CD8-positive, alpha-beta T cell (primary cell): ENCODE measurements at regions of chr7 and their contacts with region 1.

Region 1: GRCh38 chr7:74206589-74207120 is 3.2 kb upstream of the LAT2 start:
- DNase-seq: peak; percentile 57 to 89 (median 79)
- ATAC-seq: peak; percentile 86
- H3K4me3 ChIP-seq: peak overlapping the region; percentile 42 to 54
- H3K4me3 Mint-ChIP-seq: no peak overlapping the region
- H3K27ac ChIP-seq: no peak overlapping the region
- H3K27ac Mint-ChIP-seq: no peak overlapping the region
- H3K4me1 ChIP-seq: peaks cover 20% of the 10 kb centered on the region
- H3K4me1 Mint-ChIP-seq: peaks cover 22% of the 10 kb centered on the region
- H3K27me3 ChIP-seq: no peaks in the 10 kb centered on the region
- H3K27me3 Mint-ChIP-seq: peaks cover 3% of the 10 kb centered on the region
- CTCF ChIP-seq: peak; percentile 99

Region 2: DNA sequence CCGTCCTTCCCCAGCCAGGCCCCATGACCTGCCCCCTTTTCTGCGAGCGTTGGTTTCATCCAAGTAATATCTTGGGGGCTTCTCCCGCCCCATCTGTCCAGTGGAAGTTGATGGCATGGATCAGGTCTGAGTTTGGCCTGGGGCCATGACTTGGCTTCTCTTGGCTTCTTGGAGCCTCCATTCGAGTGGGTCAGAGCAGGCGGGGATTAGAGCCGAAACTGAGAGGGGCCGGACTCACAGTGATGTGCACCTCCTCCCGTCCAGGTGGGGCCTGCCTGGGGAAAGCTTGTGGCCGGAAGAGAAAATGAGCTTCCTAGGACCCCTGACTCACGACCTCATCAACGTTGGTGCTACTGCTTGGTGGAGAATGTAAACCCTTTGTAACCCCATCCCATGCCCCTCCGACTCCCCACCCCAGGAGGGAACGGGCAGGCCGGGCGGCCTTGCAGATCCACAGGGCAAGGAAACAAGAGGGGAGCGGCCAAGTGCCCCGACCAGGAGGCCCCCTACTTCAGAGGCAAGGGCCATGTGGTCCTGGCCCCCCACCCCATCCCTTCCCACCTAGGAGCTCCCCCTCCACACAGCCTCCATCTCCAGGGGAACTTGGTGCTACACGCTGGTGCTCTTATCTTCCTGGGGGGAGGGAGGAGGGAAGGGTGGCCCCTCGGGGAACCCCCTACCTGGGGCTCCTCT is 138.1 kb before region 1 on chr7:
- CTCF ChIA-PET with region 1: interaction called, 10 read pairs
- POLR2A ChIA-PET with region 1: no interaction called
- intact Hi-C with region 1: loop called (anchors 1 to 2 kb)
- DNase-seq: no peak
- ATAC-seq: no peak
- H3K4me3 ChIP-seq: no peak overlapping the region
- H3K4me3 Mint-ChIP-seq: no peak overlapping the region
- H3K27ac ChIP-seq: no peak overlapping the region
- H3K27ac Mint-ChIP-seq: no peak overlapping the region
- H3K4me1 ChIP-seq: no peaks in the 10 kb centered on the region
- H3K4me1 Mint-ChIP-seq: peaks cover 2% of the 10 kb centered on the region
- H3K27me3 ChIP-seq: no peaks in the 10 kb centered on the region
- H3K27me3 Mint-ChIP-seq: no peaks in the 10 kb centered on the region
- CTCF ChIP-seq: no peak

Region 3: DNA sequence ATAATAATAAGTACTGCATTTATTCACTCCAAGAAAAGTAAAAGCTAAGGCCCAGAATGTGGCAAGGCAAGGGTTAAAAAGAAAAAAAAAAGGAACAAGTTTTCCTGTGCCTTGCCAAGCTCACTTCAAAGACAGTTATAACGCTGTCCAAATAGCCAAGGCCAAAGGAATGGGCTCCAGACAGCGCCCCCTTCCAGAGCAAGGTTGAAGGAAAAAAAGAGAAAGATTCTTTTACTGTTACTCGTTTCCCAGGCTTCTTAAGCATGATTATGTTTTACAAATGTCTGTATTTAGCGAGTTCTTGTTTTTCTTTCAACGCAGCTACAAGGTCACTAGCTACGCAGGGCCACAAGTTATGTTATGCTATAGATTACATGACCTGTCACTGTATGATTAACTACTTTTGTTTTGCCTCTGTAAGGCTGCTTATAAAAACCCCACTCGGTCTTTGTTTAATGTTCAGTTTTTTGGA is 41.6 kb before region 1 on chr7:
- CTCF ChIA-PET with region 1: no interaction called
- POLR2A ChIA-PET with region 1: no interaction called
- intact Hi-C with region 1: no loop called
- DNase-seq: no peak
- ATAC-seq: no peak
- H3K4me3 ChIP-seq: no peak overlapping the region
- H3K4me3 Mint-ChIP-seq: no peak overlapping the region
- H3K27ac ChIP-seq: no peak overlapping the region
- H3K27ac Mint-ChIP-seq: no peak overlapping the region
- H3K4me1 ChIP-seq: no peaks in the 10 kb centered on the region
- H3K4me1 Mint-ChIP-seq: no peaks in the 10 kb centered on the region
- H3K27me3 ChIP-seq: no peaks in the 10 kb centered on the region
- H3K27me3 Mint-ChIP-seq: no peaks in the 10 kb centered on the region
- CTCF ChIP-seq: no peak

Region 4: DNA sequence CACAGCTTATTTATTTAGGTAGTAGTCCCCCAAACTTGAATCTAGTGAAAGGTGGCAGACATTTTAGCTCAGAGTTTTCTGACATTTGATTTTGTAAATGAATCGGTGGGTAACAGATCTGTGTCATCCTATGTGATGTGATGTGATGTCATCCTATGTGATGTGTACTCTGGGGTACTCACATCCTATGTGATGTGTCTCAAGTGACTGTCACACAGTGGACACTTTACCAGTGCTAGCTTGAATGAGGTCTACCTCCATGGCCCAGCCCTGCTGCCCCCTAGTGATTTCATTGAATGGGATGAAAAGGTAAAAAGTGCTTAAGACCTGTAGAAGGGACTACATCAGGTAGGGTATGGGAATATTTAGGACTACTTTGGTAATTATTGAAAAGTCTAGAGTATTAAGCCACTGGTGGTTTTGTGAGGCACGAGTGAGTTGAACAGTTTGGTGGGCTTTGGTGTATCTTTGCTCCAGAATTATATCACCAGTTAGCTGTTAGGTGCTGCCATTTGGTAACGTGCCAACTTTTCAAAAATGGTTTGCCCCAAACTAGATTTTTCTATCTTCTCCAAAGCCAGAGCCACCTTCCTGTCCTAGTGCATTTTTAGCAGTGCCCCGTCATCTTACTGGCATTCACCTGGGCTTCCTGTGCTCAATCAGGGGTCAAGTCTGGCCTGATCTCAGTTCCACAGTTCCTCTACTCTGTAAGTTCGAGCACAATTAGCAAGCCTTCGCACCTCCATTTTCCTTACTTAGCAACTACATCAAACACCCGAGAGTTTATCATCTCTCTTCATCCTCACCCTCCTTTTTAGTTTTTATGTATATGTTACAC is 22.8 kb before region 1 on chr7:
- CTCF ChIA-PET with region 1: interaction called, 25 read pairs
- POLR2A ChIA-PET with region 1: no interaction called
- intact Hi-C with region 1: no loop called
- DNase-seq: peak in 4 of 9 experiments; percentile 19 to 54 (median 36)
- ATAC-seq: peak; percentile 75
- H3K4me3 ChIP-seq: no peak overlapping the region
- H3K4me3 Mint-ChIP-seq: no peak overlapping the region
- H3K27ac ChIP-seq: peak overlapping the region in 1 of 2 experiments; percentile 40
- H3K27ac Mint-ChIP-seq: peak overlapping the region; percentile 78
- H3K4me1 ChIP-seq: peaks cover 74% of the 10 kb centered on the region
- H3K4me1 Mint-ChIP-seq: peaks cover 89% of the 10 kb centered on the region
- H3K27me3 ChIP-seq: no peaks in the 10 kb centered on the region
- H3K27me3 Mint-ChIP-seq: no peaks in the 10 kb centered on the region
- CTCF ChIP-seq: no peak

Region 5: GRCh38 chr7:74193054-74193453 is 13.6 kb before region 1 on chr7:
- CTCF ChIA-PET with region 1: interaction called, 25 read pairs
- POLR2A ChIA-PET with region 1: no interaction called
- intact Hi-C with region 1: no loop called
- DNase-seq: no peak
- ATAC-seq: no peak
- H3K4me3 ChIP-seq: no peak overlapping the region
- H3K4me3 Mint-ChIP-seq: no peak overlapping the region
- H3K27ac ChIP-seq: no peak overlapping the region
- H3K27ac Mint-ChIP-seq: no peak overlapping the region
- H3K4me1 ChIP-seq: peaks cover 14% of the 10 kb centered on the region
- H3K4me1 Mint-ChIP-seq: peaks cover 28% of the 10 kb centered on the region
- H3K27me3 ChIP-seq: no peaks in the 10 kb centered on the region
- H3K27me3 Mint-ChIP-seq: no peaks in the 10 kb centered on the region
- CTCF ChIP-seq: no peak

Region 6: GRCh38 chr7:74217455-74218342 is 11.0 kb after region 1 on chr7:
- CTCF ChIA-PET with region 1: interaction called, 20 read pairs
- POLR2A ChIA-PET with region 1: no interaction called
- intact Hi-C with region 1: no loop called
- DNase-seq: peak in 2 of 9 experiments; percentile 29 to 55
- ATAC-seq: no peak
- H3K4me3 ChIP-seq: no peak overlapping the region
- H3K4me3 Mint-ChIP-seq: peak overlapping the region; percentile 56
- H3K27ac ChIP-seq: no peak overlapping the region
- H3K27ac Mint-ChIP-seq: no peak overlapping the region
- H3K4me1 ChIP-seq: peaks cover 12% of the 10 kb centered on the region
- H3K4me1 Mint-ChIP-seq: peaks cover 13% of the 10 kb centered on the region
- H3K27me3 ChIP-seq: no peaks in the 10 kb centered on the region
- H3K27me3 Mint-ChIP-seq: peaks cover 3% of the 10 kb centered on the region
- CTCF ChIP-seq: no peak

Region 7: DNA sequence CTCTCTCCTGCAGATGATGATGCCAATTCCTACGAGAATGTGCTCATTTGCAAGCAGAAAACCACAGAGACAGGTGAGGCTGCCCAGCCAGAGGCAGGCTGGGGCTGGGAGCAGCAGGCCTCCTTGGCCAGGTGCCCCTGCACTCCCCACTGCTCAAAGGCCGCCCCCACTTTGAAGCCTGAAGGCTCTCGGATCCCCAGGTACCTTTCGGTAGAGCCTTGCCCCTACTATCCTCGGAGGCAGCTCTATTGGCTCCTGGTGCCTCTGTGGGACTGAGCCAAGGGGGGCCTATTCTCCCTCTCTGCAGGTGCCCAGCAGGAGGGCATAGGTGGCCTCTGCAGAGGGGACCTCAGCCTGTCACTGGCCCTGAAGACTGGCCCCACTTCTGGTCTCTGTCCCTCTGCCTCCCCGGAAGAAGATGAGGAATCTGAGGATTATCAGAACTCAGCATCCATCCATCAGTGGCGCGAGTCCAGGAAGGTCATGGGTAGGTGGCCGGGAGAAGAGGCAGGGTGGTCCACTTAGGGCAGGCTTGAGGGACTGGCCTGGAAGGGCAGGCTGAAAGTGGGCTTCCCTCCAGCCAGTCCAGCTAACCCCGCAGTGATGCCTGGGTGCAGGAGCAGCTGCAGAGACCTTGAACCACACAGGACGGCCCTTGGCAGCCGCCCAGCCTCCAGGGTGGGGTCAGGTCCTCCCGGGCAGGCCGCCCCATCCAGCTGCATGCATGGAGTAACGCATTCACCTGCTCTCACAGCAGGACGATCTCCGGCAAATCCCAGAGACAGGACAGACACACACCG is 17.3 kb after region 1 on chr7:
- CTCF ChIA-PET with region 1: interaction called, 20 read pairs
- POLR2A ChIA-PET with region 1: no interaction called
- intact Hi-C with region 1: no loop called
- DNase-seq: no peak
- ATAC-seq: no peak
- H3K4me3 ChIP-seq: no peak overlapping the region
- H3K4me3 Mint-ChIP-seq: no peak overlapping the region
- H3K27ac ChIP-seq: no peak overlapping the region
- H3K27ac Mint-ChIP-seq: no peak overlapping the region
- H3K4me1 ChIP-seq: no peaks in the 10 kb centered on the region
- H3K4me1 Mint-ChIP-seq: peaks cover 2% of the 10 kb centered on the region
- H3K27me3 ChIP-seq: no peaks in the 10 kb centered on the region
- H3K27me3 Mint-ChIP-seq: no peaks in the 10 kb centered on the region
- CTCF ChIP-seq: no peak

Region 8: DNA sequence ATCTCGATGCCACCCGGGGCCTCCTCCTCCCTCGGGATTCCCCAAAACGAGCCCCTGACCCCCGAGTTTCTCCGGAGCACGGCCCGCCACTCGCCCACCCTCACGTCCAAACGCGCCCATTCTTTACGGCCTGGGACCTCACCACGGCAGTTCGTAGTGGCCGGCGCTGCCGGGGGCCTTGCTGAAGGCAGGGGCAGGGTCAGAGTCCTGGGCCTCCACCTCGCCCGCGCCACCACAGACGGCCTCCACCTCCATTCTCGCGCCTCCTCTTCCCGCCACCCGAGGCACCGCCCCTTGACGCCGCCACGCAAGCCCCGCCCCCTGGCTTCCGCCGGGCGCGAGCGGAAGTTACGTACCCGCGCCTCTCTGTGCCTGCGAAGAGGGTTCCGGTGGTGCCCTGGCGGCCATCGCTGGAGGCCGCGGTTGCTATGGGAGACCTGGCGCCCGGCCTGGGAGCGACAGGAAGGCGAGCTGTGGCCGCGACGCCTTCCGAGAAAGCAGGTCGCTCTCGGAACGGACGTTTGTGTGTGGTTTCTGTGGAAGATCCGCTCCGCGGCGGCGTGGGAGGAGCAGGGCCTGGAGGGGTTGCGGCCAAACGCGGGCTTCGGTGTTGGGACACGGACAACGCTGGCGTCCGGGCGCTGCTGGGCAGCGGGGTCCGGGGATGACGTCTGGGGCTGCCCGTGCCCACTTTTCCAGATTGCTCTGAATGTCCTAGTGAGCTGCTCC is 47.6 kb after region 1 on chr7 and contains the start of gene RFC2:
- CTCF ChIA-PET with region 1: interaction called, 4 read pairs
- POLR2A ChIA-PET with region 1: no interaction called
- intact Hi-C with region 1: loop called (anchors 5 to 10 kb)
- DNase-seq: peak; percentile 93 to 99 (median 97)
- ATAC-seq: peak; percentile 95
- H3K4me3 ChIP-seq: peak within 1 kb of the TSS; percentile 85 to 99
- H3K4me3 Mint-ChIP-seq: peak within 1 kb of the TSS; percentile 93
- H3K27ac ChIP-seq: peak within 1 kb of the TSS; percentile 89 to 93
- H3K27ac Mint-ChIP-seq: peak within 1 kb of the TSS; percentile 96
- H3K4me1 ChIP-seq: peaks cover 17% of the 10 kb centered on the region
- H3K4me1 Mint-ChIP-seq: peaks cover 28% of the 10 kb centered on the region
- H3K27me3 ChIP-seq: no peaks in the 10 kb centered on the region
- H3K27me3 Mint-ChIP-seq: no peaks in the 10 kb centered on the region
- CTCF ChIP-seq: no peak
- total RNA-seq, gene RFC2: 8.8 to 10.7 TPM